ENCODE measurements at regions of chr7 and their contacts with region 1.

Region 1: DNA sequence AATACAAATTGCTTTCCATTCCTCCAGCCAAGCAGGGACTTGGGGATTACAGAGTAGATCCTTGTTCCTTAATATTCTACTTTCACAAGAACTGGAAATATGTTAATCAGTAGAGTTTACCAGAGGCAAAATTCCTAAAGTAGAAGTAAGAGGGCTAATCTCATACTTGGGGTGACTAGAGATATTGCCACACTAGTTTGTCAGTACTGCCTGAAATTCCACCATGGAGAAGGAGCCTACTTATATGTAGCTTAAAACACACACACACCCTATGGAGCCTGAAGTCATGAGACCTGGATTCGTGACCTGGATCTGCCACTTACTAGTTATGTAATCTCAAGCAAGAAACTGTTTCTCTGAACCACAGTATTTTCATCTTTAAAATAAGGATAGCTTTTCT is 33.9 kb downstream of the STRIP2 start:
- DNase-seq: no peak
- H3K4me3 ChIP-seq: no peak overlapping the region
- H3K27ac ChIP-seq: no peak overlapping the region
- H3K4me1 ChIP-seq: no peaks in the 10 kb centered on the region
- H3K27me3 ChIP-seq: no peaks in the 10 kb centered on the region
- CTCF ChIP-seq: no peak

Region 2: DNA sequence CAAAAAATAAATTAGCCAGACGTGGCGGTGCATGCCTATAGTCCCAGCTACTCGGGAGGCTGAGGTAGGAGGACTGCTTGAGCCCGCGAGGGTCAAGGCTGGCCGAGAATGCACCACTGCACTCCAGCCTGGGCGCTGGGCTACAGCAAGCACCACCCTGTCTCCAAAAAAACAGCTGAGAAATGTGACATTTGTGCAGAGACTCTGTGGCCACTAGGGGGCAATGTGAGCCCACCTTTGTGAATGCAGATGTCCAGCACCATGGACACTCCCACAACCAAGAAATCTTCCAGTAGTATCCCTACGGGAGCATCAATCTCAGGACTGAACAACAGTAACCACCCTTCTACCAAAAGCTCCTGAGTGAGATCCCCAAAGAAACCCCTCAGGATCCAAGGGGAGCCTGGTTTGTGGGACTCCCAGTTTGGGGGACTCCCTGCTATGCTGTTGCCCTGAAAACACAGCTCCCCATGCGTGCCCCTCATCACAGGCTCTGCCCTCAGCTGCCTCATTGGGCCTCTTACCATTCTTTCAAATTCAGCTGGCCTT is 249.5 kb before region 1 on chr7:
- intact Hi-C with region 1: loop called (anchors 1 kb)
- DNase-seq: peak in 1 of 2 donors; percentile 91
- H3K4me3 ChIP-seq: no peak overlapping the region
- H3K27ac ChIP-seq: no peak overlapping the region
- H3K4me1 ChIP-seq: no peaks in the 10 kb centered on the region
- H3K27me3 ChIP-seq: no peaks in the 10 kb centered on the region
- CTCF ChIP-seq: peak; percentile 86 to 90 (median 87)

Region 3: GRCh38 chr7:129367700-129368388 is 100.2 kb before region 1 on chr7:
- intact Hi-C with region 1: loop called (anchors 1 kb)
- DNase-seq: peak; percentile 12 to 74
- H3K4me3 ChIP-seq: peak overlapping the region in 1 of 2 donors; percentile 33
- H3K27ac ChIP-seq: no peak overlapping the region
- H3K4me1 ChIP-seq: no peaks in the 10 kb centered on the region
- H3K27me3 ChIP-seq: no peaks in the 10 kb centered on the region
- CTCF ChIP-seq: peak; percentile 70 to 87 (median 81)

Measured in ascending aorta (tissue), 2 donors.